ENCODE measurements at regions of chr5 and their contacts with region 1.

Region 1: DNA sequence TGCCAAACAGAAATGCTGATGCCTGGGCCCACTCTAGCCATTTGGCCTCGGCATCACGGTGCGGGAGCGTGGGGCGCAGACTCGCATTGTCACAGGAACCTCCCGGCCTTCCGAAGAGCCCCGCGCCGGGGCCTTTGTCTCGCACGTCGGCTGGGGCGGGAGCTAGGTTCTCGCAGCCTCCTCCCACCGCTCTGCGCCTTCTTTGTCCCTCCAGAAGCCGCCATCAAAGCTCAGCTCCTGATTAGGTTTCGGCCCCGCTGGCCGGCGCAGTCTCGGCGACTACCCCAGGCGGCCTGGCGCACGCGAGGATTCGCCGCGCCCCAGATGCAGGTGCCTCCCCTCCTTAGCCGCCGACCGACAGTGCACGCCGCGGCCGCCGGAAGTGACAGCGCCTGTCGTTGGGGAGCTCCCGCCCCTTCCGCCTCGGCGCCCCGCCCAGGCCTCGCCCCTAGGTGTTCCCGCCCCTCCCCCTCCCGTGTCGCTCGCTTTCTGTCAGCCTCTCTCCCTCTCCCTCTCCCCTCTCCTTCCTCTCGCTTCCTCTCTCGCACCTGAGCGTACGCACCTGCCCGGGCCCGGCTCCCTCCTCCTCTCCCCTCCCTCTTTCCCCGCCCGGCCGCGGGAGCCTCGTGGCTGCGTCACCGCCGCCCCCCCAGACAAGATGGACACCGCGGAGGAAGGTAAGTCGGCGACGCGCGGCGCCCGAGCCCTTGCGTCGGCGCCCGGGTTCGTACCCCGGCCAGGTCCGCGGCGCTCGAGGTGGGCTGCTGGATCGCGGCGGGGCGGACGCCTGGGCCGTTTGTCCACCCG is at the start of gene MARCHF6:
- DNase-seq: peak; percentile 88
- H3K4me3 Mint-ChIP-seq: peak within 1 kb of the TSS; percentile 99
- H3K27ac Mint-ChIP-seq: peak within 1 kb of the TSS; percentile 98
- H3K4me1 Mint-ChIP-seq: peaks cover 35% of the 10 kb centered on the region
- H3K27me3 Mint-ChIP-seq: no peaks in the 10 kb centered on the region
- total RNA-seq, gene MARCHF6: 111 and 116 TPM in 2 replicates

Region 2: GRCh38 chr5:10339058-10339811 is 14.2 kb before region 1 on chr5:
- intact Hi-C with region 1: no loop called
- DNase-seq: no peak
- H3K4me3 Mint-ChIP-seq: no peak overlapping the region
- H3K27ac Mint-ChIP-seq: no peak overlapping the region
- H3K4me1 Mint-ChIP-seq: no peaks in the 10 kb centered on the region
- H3K27me3 Mint-ChIP-seq: peaks cover 13% of the 10 kb centered on the region

Region 3: GRCh38 chr5:10364186-10364683 is 10.8 kb after region 1 on chr5:
- intact Hi-C with region 1: loop called (anchors 2 kb)
- DNase-seq: no peak
- H3K4me3 Mint-ChIP-seq: no peak overlapping the region
- H3K27ac Mint-ChIP-seq: no peak overlapping the region
- H3K4me1 Mint-ChIP-seq: peaks cover 31% of the 10 kb centered on the region
- H3K27me3 Mint-ChIP-seq: no peaks in the 10 kb centered on the region

Region 4: DNA sequence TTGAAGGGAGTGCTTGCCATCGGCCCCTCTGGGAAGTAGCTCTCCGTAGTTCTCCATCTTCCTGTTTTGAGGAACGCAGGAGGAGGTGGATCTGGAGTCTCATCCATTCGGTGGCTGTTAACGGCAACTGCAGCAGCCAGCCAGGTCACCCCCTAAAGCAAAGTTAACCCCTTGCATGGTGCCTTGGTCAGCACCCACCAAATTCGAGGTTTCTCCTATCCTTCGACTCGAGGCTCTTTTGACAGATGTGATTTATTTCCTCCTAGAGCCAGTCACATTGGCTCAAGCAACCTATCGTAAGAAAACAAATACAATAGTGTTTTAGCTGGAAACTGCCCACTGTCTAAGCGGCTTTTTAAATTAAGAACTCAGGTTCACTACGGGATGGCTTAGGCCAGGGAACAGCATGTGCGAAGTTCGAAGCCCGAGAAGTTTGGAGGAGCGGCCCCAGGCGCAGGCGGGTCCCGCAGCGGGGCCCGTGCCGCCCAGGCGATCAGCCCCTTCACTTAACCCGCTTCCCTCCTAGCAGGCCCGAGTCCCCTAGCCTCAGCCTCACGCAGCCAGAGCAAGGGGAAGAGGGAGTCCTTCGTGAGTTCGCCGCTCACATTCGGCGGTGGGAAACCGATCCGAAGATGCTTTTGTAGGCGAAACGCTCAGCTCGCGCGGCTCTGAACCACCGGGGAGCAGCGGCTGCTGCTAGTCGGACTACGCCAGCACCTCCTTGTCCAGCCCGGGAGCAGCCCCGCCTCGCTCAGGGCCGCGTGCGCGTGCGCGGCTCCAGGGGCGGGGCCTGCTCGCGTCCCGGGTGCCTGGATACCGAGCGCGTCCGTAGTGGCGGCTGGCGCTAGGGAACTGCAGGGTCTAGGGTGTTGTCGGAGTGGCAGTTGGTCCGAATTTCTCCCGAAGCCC is 87.9 kb after region 1 on chr5 and contains the start of gene ROPN1L:
- intact Hi-C with region 1: loop called (anchors 5 kb)
- DNase-seq: peak; percentile 79
- H3K4me3 Mint-ChIP-seq: peak within 1 kb of the TSS; percentile 82
- H3K27ac Mint-ChIP-seq: no peak within 1 kb of the TSS
- H3K4me1 Mint-ChIP-seq: peaks cover 34% of the 10 kb centered on the region
- H3K27me3 Mint-ChIP-seq: peaks cover 10% of the 10 kb centered on the region
- total RNA-seq, gene ROPN1L: 0.16 and 0.55 TPM in 2 replicates

Region 5: GRCh38 chr5:10479226-10479721 is 125.8 kb after region 1 on chr5:
- intact Hi-C with region 1: no loop called
- DNase-seq: no peak
- H3K4me3 Mint-ChIP-seq: no peak overlapping the region
- H3K27ac Mint-ChIP-seq: no peak overlapping the region
- H3K4me1 Mint-ChIP-seq: no peaks in the 10 kb centered on the region
- H3K27me3 Mint-ChIP-seq: peaks cover 5% of the 10 kb centered on the region

Region 6: DNA sequence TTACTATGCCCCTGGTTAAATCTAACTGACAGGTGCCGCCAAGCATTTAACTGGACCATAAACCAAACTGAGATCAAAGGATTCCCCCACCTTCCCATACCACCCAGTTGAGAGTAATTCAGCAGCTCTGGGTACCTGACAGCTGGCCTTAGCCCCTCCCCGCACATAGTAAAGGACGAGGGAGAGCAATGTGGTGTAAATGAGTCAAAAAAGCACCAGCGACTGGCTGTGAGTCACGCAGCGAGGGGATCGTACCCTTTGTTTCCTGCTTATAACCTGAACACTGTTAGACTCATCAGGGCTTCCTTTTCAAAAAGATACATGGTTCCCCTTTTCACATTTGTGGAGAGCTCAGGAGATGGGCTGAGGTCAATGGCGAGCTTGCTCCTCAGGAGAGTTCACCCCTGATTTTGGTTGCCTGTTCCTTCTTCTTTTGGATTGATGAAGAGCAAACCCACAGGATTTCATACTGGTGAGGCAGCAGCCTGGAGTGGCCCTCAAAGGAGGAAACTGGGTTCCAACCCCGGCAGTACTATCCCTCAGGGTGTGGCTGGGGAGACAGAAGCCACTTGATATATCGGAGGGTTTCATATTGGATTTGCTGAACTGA is 281.9 kb after region 1 on chr5:
- intact Hi-C with region 1: loop called (anchors 2 kb)
- DNase-seq: peak; percentile 69
- H3K4me3 Mint-ChIP-seq: peak overlapping the region; percentile 73
- H3K27ac Mint-ChIP-seq: peak overlapping the region; percentile 97
- H3K4me1 Mint-ChIP-seq: peaks cover 57% of the 10 kb centered on the region
- H3K27me3 Mint-ChIP-seq: no peaks in the 10 kb centered on the region

Region 7: DNA sequence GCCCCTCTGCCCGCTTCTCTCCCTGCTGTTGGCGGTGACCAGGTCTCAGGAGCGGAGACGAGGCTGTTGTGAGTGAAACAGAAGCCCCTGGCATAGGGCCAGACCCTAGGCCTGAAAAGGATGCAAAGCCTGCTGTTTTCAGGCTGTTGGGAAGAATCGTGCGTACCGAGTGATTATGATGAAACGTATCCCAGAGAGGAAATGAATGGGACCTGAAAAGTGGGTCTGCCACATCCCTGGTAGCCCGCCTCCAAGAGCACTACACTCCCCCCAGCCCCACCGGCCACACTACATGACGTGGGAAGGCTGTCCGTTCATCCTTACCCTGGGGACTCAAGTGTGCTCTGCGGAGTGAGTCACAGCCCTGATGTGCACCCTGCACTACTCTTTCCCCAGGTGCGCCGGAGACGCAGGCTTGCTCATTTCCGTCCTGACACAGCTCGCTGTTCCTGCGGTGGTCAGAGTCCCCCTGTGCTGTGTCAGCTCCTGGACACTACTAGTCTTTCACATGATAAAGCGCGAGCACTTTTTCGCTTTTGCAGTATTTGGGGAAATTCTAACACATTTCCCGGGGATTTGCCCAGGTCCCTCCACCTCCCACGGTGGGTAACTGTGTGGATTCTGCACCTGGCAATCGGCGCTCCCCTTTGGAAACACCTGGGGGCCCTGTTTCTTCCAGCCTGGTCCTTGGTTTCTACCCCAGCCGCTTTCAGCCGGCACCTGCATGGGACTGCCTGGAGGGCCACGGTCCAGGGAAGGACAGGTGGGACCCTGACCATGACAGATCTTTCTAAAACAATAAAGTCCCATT is 301.9 kb after region 1 on chr5:
- intact Hi-C with region 1: no loop called
- DNase-seq: no peak
- H3K4me3 Mint-ChIP-seq: no peak overlapping the region
- H3K27ac Mint-ChIP-seq: no peak overlapping the region
- H3K4me1 Mint-ChIP-seq: no peaks in the 10 kb centered on the region
- H3K27me3 Mint-ChIP-seq: no peaks in the 10 kb centered on the region